ENCODE measurements at regions of chr9 and their contacts with region 1.

Region 1: DNA sequence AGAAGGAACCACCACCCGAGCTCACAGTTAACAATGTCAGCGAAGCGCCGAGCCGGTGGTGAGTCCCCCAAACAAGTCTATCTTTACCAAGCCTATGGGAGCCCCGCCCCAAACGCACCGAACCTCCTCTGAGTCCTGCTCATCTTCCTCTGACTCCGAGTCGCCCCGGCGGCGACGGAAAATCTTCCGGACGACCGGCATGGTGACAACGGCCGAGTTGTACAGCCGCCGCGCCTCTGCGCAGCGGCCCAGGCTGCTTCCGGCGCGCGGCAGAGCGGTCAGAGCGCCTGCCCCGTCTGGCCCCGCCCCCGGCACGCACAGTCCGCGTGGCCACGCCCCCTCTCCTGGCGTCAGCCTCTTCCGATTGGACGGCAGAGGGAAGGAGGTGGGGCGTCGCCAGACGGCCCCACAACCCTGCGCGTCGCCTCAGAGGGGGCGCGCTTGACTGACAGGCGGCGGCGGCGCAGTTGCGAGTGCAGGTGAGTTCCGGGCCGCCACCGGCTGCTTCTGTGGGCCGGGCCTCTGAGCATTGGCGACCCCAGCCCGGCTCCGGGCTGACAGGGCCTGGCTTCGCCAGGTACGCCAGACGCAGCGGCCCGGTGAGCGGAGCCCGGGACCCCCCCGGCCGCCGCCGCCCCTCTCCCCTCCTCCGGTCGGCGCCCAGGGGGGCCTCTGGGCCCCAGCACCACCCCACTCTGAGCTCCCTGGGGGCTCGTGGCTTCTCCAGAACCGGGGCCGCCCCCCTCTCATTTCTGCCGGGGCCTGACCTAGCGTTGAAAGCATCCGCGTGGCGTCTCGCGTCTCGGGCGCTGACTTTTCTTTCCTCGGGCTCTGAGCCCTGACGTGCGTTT is at the starts of genes C9orf78 and USP20:
- DNase-seq: peak; percentile 100
- ATAC-seq: peak; percentile 91
- H3K4me3 Mint-ChIP-seq: peak within 1 kb of the TSS; percentile 95
- H3K27ac Mint-ChIP-seq: peak within 1 kb of the TSS; percentile 96
- H3K4me1 Mint-ChIP-seq: peaks cover 49% of the 10 kb centered on the region
- H3K27me3 Mint-ChIP-seq: no peaks in the 10 kb centered on the region
- total RNA-seq, gene C9orf78: 71.4 to 73.4 TPM
- total RNA-seq, gene USP20: 107 to 111 TPM

Region 2: DNA sequence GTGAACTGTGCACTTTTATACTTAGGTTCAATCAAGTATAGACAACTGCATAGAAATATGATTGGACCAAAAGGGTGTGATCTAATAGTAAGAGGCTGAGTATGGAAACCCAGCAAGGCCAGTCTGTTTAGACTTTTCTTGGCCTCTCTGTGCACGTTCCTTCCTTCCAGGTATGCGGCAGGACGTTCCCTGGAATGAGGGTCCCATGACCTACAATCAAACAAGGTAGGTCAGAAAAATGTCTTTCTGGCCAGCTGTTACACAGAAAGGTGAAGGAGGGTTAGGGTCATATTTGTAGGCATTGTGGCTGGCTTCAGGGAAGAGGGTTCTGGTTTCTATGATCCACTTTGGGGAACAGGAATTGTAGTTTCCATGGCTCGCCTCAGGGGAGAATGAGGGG is 299.2 kb before region 1 on chr9:
- POLR2A ChIA-PET with region 1: no interaction called
- DNase-seq: no peak
- ATAC-seq: no peak
- H3K4me3 Mint-ChIP-seq: no peak overlapping the region
- H3K27ac Mint-ChIP-seq: no peak overlapping the region
- H3K4me1 Mint-ChIP-seq: no peaks in the 10 kb centered on the region
- H3K27me3 Mint-ChIP-seq: peaks cover 24% of the 10 kb centered on the region

Region 3: DNA sequence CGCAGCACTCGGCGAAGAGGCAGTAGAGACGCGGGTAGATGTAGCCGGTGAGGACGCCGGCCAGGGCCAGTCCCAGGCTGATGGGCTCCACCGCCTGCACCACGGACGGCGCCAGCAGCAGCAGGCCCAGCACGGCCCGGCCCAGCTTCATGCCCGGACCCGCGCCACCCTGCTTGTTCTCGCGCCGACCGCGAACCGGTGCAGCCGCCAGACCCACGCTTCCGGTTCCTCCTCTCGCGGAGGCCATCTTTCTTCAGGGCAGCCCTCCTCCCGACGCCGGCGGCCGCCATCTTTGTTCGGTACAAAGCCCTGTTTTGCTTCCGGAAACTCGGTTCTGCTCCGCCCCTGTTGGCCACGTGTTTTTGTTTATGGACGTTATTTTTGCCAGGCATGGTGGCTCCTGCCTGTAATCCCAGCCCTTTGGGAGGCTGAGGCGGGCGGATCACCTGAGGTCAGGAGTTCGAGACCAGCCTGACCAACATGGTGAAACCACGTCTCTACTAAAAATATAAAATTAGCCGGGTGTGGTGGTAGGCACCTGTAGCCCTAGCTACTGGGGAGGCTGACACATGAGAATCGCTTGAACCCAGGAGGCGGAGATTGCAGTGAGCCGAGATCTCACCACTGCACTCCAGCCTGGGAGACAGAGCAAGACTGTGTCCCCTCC is 11.2 kb before region 1 on chr9 and contains the start of gene TOR1A:
- POLR2A ChIA-PET with region 1: interaction called, 12 read pairs
- DNase-seq: peak; percentile 90
- ATAC-seq: peak; percentile 87
- H3K4me3 Mint-ChIP-seq: peak within 1 kb of the TSS; percentile 86
- H3K27ac Mint-ChIP-seq: peak within 1 kb of the TSS; percentile 78
- H3K4me1 Mint-ChIP-seq: peaks cover 10% of the 10 kb centered on the region
- H3K27me3 Mint-ChIP-seq: no peaks in the 10 kb centered on the region
- total RNA-seq, gene TOR1A: 46.6 to 47.2 TPM

Region 4: DNA sequence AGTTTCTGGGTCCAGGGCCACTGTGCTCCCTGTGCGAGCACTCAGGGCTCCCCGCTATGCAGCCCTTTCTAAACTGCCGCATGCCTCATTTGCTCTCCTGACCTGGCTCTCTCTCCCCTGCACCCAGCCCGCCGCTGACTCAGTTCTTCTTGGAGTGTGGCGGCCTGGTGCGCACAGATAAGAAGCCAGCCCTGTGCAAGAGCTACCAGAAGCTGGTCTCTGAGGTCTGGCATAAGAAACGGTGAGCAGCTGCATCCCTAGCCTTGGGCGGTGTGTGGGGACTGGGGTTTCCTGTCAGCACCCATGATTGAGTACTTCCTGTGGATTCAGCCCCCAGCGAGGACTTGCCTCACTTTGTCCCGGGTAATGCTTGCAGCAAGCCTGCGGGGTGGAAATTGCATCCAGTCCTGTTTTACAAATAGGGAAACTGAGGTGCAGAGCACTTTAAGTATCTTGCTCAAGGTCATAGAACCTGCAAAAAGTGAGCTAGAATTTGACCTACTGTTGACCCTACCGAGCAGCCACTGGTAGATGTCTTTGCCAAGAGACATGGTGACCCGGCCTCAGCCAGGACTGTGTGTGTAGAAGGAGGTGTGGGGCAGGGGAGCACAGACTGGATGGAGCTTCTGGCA is 27.9 kb after region 1 on chr9:
- POLR2A ChIA-PET with region 1: interaction called, 96 read pairs
- DNase-seq: peak; percentile 85
- ATAC-seq: peak; percentile 89
- H3K4me3 Mint-ChIP-seq: peak overlapping the region; percentile 73
- H3K27ac Mint-ChIP-seq: peak overlapping the region; percentile 89
- H3K4me1 Mint-ChIP-seq: peaks cover 61% of the 10 kb centered on the region
- H3K27me3 Mint-ChIP-seq: no peaks in the 10 kb centered on the region

Measured in activated naive CD8-positive, alpha-beta T cell treated with anti-CD3 and anti-CD28 coated beads, Interleukin-2, amount 10 ng/mL, durations not matched to agents 7 days and 5 days (primary cell).